ENCODE measurements at regions of chr19 and their contacts with region 1.

Region 1: GRCh38 chr19:13718733-13719132 is 45.6 kb upstream of the MRI1 start:
- DNase-seq: no peak
- ATAC-seq: no peak
- H3K4me3 ChIP-seq: no peak overlapping the region
- H3K4me3 Mint-ChIP-seq: no peak overlapping the region
- H3K27ac ChIP-seq: no peak overlapping the region
- H3K27ac Mint-ChIP-seq: no peak overlapping the region
- H3K4me1 ChIP-seq: no peaks in the 10 kb centered on the region
- H3K4me1 Mint-ChIP-seq: peaks cover 2% of the 10 kb centered on the region
- H3K27me3 ChIP-seq: peaks cover 0 to 5% (median 3%) of the 10 kb centered on the region in 4 experiments
- H3K27me3 Mint-ChIP-seq: peaks cover 16% of the 10 kb centered on the region
- CTCF ChIP-seq: no peak

Region 2: GRCh38 chr19:13597640-13598039 is 121.1 kb before region 1 on chr19:
- CTCF ChIA-PET with region 1: interaction called, 22 read pairs
- POLR2A ChIA-PET with region 1: no interaction called
- intact Hi-C with region 1: no loop called
- DNase-seq: peak; percentile 78
- ATAC-seq: peak; percentile 88
- H3K4me3 ChIP-seq: no peak overlapping the region
- H3K4me3 Mint-ChIP-seq: no peak overlapping the region
- H3K27ac ChIP-seq: no peak overlapping the region
- H3K27ac Mint-ChIP-seq: peak overlapping the region; percentile 6
- H3K4me1 ChIP-seq: no peaks in the 10 kb centered on the region
- H3K4me1 Mint-ChIP-seq: no peaks in the 10 kb centered on the region
- H3K27me3 ChIP-seq: peaks cover 0 to 7% (median 1%) of the 10 kb centered on the region in 4 experiments
- H3K27me3 Mint-ChIP-seq: peaks cover 26% of the 10 kb centered on the region
- CTCF ChIP-seq: peak; percentile 61

Measured in B cell (primary cell).